HCT116 (cell line): ENCODE measurements at regions of chr2 and their contacts with region 1.

Region 1: DNA sequence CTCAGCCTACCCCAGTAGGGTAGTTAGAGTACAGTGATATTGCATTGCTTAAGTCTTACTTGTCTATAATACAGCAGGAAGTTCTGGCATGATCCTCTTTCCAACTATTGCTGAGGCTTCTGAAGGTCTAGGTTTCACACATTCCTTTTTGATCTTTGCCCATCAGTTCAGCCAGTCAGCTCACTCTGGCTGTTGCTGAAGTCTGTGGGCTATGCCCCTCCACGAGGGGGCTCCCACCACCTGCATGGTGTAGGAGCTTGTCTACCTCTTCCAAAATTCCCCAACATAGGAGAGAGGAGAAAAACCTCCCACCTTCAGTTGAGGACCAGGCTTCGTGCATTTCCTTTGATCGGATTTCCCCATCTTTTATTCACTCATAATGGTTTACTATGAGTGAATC is 26.3 kb downstream of the PROKR1 start:
- DNase-seq: no peak
- ATAC-seq: no peak
- H3K4me3 ChIP-seq: no peak overlapping the region
- H3K27ac ChIP-seq: no peak overlapping the region
- H3K4me1 ChIP-seq: no peaks in the 10 kb centered on the region
- H3K27me3 ChIP-seq: no peaks in the 10 kb centered on the region
- CTCF ChIP-seq: no peak
- POLR2A ChIP-seq: no peak
- RAD21 ChIP-seq: no peak

Region 2: DNA sequence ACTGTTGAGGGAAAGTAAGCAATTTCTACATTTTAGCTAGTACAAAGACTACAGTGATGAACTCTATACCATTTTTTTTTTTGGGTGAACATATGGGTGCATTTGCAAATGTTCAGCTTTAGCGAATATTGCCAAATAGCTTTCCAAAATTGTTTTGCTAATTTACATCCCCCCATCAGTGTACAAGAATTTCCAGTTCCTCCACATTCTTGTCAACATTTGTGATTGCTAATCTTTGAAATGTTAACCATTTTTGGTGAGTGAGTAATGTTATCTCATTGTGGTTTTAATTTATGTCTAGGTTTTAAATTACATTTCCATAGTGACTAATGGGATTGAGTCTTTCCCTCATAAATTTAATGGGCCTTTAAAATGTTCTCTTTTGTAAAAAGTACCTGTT is 333.5 kb before region 1 on chr2:
- CTCF ChIA-PET with region 1: no interaction called
- POLR2A ChIA-PET with region 1: no interaction called
- RAD21 ChIA-PET with region 1: no interaction called
- intact Hi-C with region 1: no loop called
- DNase-seq: peak; percentile 10
- ATAC-seq: 0 out of 2 replicates have a peak, but pooled peaks have one; percentile 53
- H3K4me3 ChIP-seq: no peak overlapping the region
- H3K27ac ChIP-seq: no peak overlapping the region
- H3K4me1 ChIP-seq: peaks cover 13 to 22% of the 10 kb centered on the region in 2 experiments; a peak in 3 of 4 replicates
- H3K27me3 ChIP-seq: no peaks in the 10 kb centered on the region
- CTCF ChIP-seq: no peak
- POLR2A ChIP-seq: no peak
- RAD21 ChIP-seq: no peak

Region 3: DNA sequence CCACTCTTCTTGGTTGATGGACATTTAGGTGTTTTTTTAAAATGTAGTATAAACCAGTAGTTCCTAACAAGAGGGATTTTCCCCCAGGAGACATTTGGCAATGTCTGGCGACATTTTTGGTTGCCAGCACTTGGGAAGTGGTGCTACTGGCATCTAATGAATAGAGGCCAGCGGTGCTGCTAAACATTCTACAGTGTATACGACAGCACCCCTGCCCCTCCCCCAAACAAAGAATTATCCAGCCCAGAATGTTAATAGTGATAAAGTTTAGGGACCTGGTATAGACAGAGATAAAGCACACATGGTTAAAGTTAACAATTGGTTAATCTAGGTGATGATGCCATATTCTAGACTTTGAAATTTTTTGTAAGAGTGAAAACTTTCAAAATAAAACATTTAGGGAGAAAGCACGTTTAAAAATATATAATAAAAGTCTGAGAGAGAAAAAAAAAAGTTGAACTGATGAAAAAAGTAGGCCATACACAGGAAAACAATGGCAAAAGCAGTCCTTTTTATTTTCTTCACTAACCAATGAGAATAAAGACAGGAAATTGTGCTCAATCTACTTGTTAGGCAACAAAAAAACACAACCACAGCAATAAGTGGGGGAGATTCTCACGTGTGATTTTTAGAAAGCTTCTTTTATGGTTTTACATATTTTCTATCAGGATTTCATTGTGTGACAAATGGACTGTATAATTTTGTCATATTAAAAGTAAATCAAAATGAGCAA is 217.3 kb before region 1 on chr2:
- CTCF ChIA-PET with region 1: no interaction called
- POLR2A ChIA-PET with region 1: no interaction called
- RAD21 ChIA-PET with region 1: no interaction called
- intact Hi-C with region 1: no loop called
- DNase-seq: no peak
- ATAC-seq: no peak
- H3K4me3 ChIP-seq: no peak overlapping the region
- H3K27ac ChIP-seq: no peak overlapping the region
- H3K4me1 ChIP-seq: no peaks in the 10 kb centered on the region
- H3K27me3 ChIP-seq: no peaks in the 10 kb centered on the region
- CTCF ChIP-seq: no peak
- POLR2A ChIP-seq: no peak
- RAD21 ChIP-seq: no peak

Region 4: GRCh38 chr2:68620772-68621171 is 48.9 kb before region 1 on chr2:
- CTCF ChIA-PET with region 1: no interaction called
- POLR2A ChIA-PET with region 1: no interaction called
- RAD21 ChIA-PET with region 1: no interaction called
- intact Hi-C with region 1: loop called (anchors 5 kb)
- DNase-seq: no peak
- ATAC-seq: no peak
- H3K4me3 ChIP-seq: no peak overlapping the region
- H3K27ac ChIP-seq: no peak overlapping the region
- H3K4me1 ChIP-seq: no peaks in the 10 kb centered on the region
- H3K27me3 ChIP-seq: no peaks in the 10 kb centered on the region
- CTCF ChIP-seq: no peak
- POLR2A ChIP-seq: no peak
- RAD21 ChIP-seq: no peak